A673 (cell line): ENCODE measurements at regions of chr11 and their contacts with region 1.

Region 1: GRCh38 chr11:32323814-32324130 is 111.6 kb downstream of the WT1 start:
- DNase-seq: no peak
- H3K4me3 ChIP-seq: no peak overlapping the region
- H3K27ac ChIP-seq: no peak overlapping the region
- H3K4me1 ChIP-seq: no peaks in the 10 kb centered on the region
- H3K27me3 ChIP-seq: peaks cover 12% of the 10 kb centered on the region
- CTCF ChIP-seq: no peak

Region 2: DNA sequence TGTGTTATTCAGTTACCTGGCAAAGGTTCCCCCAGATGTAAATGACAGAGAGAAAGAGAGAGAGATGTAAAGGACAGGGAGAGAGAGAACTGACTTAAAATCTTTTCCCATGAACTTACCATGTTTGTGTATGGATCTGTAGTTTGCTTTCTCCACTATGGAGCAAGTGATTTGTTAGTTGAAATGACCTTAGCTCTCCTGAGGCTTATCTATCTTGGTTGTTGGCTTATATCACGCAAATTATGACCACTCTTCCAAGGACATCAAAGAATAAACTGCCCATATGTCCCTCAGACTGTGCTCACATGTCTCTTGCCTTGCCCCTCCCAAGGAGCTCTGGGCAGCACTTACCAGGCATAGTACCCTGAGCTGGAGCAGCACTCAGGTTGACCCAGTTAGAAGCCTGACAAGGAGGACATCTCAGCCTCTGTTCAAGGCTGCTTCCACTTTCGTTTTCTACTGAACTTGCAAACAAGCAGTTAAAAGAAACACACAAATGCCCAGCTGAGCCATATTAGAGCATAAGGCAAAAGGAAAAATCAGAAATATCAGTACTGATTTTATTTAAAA is 328.2 kb before region 1 on chr11:
- CTCF ChIA-PET with region 1: no interaction called
- POLR2A ChIA-PET with region 1: no interaction called
- intact Hi-C with region 1: no loop called
- DNase-seq: no peak
- H3K4me3 ChIP-seq: peak overlapping the region; percentile 25
- H3K27ac ChIP-seq: no peak overlapping the region
- H3K4me1 ChIP-seq: no peaks in the 10 kb centered on the region
- H3K27me3 ChIP-seq: peaks cover 89% of the 10 kb centered on the region
- CTCF ChIP-seq: no peak

Region 3: GRCh38 chr11:32374261-32374711 is 50.5 kb after region 1 on chr11:
- CTCF ChIA-PET with region 1: interaction called, 8 read pairs
- POLR2A ChIA-PET with region 1: no interaction called
- intact Hi-C with region 1: loop called (anchors 2 kb)
- DNase-seq: peak; percentile 98
- H3K4me3 ChIP-seq: no peak overlapping the region
- H3K27ac ChIP-seq: no peak overlapping the region
- H3K4me1 ChIP-seq: no peaks in the 10 kb centered on the region
- H3K27me3 ChIP-seq: no peaks in the 10 kb centered on the region
- CTCF ChIP-seq: peak; percentile 100; the same call in 1 of the 2 replicates

Region 4: DNA sequence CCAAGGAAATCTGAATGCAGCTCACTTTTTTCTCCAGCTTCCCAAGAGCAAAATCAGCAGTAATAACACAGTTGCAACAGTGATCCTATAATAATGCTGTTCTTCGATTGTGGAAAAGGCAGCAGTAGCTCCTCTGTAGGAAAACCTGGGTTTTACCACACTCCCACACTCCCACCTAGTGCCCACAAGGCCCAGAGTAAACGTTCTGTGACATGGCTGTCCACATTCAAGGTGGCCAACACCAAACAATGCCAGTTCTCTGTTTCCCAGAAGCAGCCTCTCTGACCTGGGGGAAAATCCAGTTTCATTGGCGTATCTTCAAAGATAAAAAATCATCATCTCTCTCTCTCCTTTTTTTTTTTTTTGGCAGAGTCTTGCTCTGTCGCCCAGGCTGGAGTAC is 71.4 kb after region 1 on chr11:
- CTCF ChIA-PET with region 1: interaction called, 10 read pairs
- POLR2A ChIA-PET with region 1: no interaction called
- intact Hi-C with region 1: no loop called
- DNase-seq: no peak
- H3K4me3 ChIP-seq: no peak overlapping the region
- H3K27ac ChIP-seq: no peak overlapping the region
- H3K4me1 ChIP-seq: peaks cover 49% of the 10 kb centered on the region
- H3K27me3 ChIP-seq: no peaks in the 10 kb centered on the region
- CTCF ChIP-seq: peak; percentile 39

Region 5: DNA sequence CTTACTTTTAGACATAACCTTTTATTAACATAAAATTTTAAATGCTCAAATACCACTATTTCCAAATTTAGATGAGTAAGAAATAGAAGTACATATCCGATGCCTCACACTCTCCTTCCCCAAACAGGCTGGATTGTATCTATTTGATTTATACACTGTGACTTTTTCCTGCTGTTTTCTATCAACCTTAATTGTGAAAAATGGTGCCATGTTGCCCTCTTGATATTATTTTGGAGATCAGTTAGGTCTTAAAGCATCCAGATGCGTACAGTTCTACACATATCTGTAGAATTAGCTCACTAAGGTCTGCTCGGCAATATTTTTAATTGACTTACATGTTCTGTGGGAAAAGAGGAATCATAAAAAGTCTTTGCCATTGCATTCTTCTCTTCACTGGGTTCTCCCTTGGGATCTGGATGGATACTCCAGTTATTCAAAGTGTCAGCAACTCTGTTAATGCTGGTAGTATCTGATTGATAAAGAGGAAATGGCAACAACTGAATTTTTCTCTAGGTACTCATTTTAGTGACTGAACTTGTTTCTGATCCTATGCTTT is 287.1 kb after region 1 on chr11:
- CTCF ChIA-PET with region 1: interaction called, 4 read pairs
- POLR2A ChIA-PET with region 1: no interaction called
- intact Hi-C with region 1: loop called (anchors 5 kb)
- DNase-seq: no peak
- H3K4me3 ChIP-seq: no peak overlapping the region
- H3K27ac ChIP-seq: no peak overlapping the region
- H3K4me1 ChIP-seq: no peaks in the 10 kb centered on the region
- H3K27me3 ChIP-seq: no peaks in the 10 kb centered on the region
- CTCF ChIP-seq: no peak